SK-N-SH (cell line): ENCODE measurements at regions of chr9 and their contacts with region 1.

Region 1: GRCh38 chr9:4662108-4662988 is at the start of gene PLPP6:
- DNase-seq: peak; percentile 92
- H3K4me3 ChIP-seq: peak within 1 kb of the TSS; percentile 77 to 88
- H3K27ac ChIP-seq: peak within 1 kb of the TSS; percentile 69 to 81
- H3K4me1 ChIP-seq: peaks cover 3 to 33% of the 10 kb centered on the region in 2 experiments; a peak in 3 of 4 replicates
- H3K27me3 ChIP-seq: no peaks in the 10 kb centered on the region
- CTCF ChIP-seq: peak; percentile 57
- EP300 ChIP-seq: no peak
- RAD21 ChIP-seq: peak; percentile 64
- polyA plus RNA-seq, gene PLPP6: 8.8 and 11.2 TPM in 2 replicates

Region 2: GRCh38 chr9:3698531-3698930 is 963.8 kb before region 1 on chr9:
- CTCF ChIA-PET with region 1: no interaction called
- POLR2A ChIA-PET with region 1: no interaction called
- DNase-seq: no peak
- H3K4me3 ChIP-seq: no peak overlapping the region
- H3K27ac ChIP-seq: no peak overlapping the region
- H3K4me1 ChIP-seq: no peaks in the 10 kb centered on the region; a peak in 1 of 4 replicates
- H3K27me3 ChIP-seq: no peaks in the 10 kb centered on the region
- CTCF ChIP-seq: no peak
- EP300 ChIP-seq: no peak
- RAD21 ChIP-seq: no peak

Region 3: DNA sequence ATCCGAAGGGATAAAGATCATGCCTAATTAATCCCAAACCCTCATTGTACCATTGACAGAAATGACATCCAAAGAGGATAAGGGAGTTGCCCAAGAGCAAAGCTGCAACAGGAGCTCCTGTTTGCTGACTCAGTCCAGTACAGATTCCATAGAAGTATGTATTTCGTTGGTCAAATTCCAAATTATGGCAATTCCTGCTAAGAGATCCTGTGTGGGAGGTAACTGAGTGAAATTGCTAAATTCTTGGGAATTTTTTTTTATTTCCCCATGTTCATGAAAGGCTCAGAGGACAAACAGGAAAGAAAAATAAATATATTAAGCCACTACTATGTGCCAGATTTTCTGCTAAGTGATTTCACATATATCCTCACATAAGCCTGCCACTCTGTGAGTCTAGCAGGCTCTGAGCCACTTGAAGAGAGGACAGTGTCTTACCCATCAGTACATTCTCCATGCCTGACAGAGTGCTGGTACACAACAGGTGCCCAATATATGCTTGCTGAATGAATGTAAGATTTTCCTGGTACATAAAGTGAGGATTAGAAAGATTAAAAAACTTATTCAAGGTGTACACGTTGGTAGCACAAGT is 495.2 kb before region 1 on chr9:
- CTCF ChIA-PET with region 1: no interaction called
- POLR2A ChIA-PET with region 1: no interaction called
- DNase-seq: no peak
- H3K4me3 ChIP-seq: no peak overlapping the region
- H3K27ac ChIP-seq: no peak overlapping the region
- H3K4me1 ChIP-seq: no peaks in the 10 kb centered on the region
- H3K27me3 ChIP-seq: no peaks in the 10 kb centered on the region
- CTCF ChIP-seq: no peak
- EP300 ChIP-seq: 0 out of 4 replicates have a peak, but pooled peaks of 1 of the 2 experiments have one; percentile 9
- RAD21 ChIP-seq: no peak

Region 4: DNA sequence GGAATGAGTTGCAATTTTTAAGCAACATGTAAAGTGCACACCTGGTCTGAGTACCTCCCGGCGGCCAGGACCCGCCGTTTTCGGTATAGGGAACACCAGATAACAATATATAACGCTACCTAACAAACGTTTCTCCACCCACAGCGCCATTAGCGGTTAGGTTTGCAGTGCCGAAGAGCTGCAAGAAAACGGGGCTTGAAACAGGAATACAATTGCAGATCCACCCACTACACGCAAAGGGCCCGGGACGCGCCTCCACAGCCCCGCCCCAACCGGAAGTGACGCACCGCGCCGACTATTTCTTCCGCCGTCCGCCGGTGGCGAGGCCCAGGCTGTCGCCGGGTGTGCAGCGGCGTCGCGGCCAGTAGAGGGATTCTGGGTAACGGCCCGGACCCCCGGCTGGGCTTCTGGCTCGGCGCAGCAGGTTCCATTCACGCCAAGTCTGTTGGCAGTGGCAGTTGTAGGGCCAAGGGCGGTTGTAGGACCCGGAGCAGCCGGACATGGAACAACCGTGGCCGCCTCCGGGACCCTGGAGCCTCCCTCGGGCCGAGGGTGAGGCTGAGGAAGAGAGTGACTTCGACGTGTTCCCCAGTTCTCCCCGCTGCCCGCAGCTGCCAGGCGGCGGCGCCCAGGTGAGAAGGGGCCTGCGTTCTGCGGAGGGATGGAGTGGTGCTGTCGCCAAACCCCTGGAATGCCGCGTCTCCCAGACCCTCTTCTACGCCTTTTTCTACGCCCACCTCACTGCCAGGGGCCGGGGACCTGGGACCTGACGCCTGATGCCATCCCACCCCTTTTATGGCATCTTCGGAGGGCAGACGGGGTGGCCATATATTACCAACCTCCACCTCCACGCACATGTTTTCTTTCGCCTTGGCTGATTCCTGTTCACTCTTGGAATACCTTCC is 17.2 kb after region 1 on chr9 and contains the start of gene CDC37L1:
- CTCF ChIA-PET with region 1: interaction called, 10 read pairs
- POLR2A ChIA-PET with region 1: interaction called, 17 read pairs
- DNase-seq: peak; percentile 93
- H3K4me3 ChIP-seq: peak within 1 kb of the TSS; percentile 80 to 85
- H3K27ac ChIP-seq: peak within 1 kb of the TSS; percentile 96 to 97
- H3K4me1 ChIP-seq: peaks cover 3 to 5% of the 10 kb centered on the region in 2 experiments; a peak in 3 of 4 replicates
- H3K27me3 ChIP-seq: no peaks in the 10 kb centered on the region
- CTCF ChIP-seq: peak; percentile 60
- EP300 ChIP-seq: no peak
- RAD21 ChIP-seq: no peak
- polyA plus RNA-seq, gene CDC37L1: 6.5 and 7.2 TPM in 2 replicates

Region 5: GRCh38 chr9:4740638-4741364 is 78.5 kb after region 1 on chr9 and contains the start of gene AK3:
- CTCF ChIA-PET with region 1: interaction called, 12 read pairs
- POLR2A ChIA-PET with region 1: interaction called, 8 read pairs
- DNase-seq: peak; percentile 99
- H3K4me3 ChIP-seq: peak within 1 kb of the TSS; percentile 73 to 92
- H3K27ac ChIP-seq: peak within 1 kb of the TSS; percentile 67 to 78
- H3K4me1 ChIP-seq: peaks cover 5 to 13% of the 10 kb centered on the region in 2 experiments; a peak in 2 of 4 replicates
- H3K27me3 ChIP-seq: no peaks in the 10 kb centered on the region
- CTCF ChIP-seq: peak; percentile 23; the same call in 1 of the 2 replicates
- EP300 ChIP-seq: no peak
- RAD21 ChIP-seq: peak; percentile 42
- polyA plus RNA-seq, gene AK3: 20.6 and 30.8 TPM in 2 replicates

Region 6: DNA sequence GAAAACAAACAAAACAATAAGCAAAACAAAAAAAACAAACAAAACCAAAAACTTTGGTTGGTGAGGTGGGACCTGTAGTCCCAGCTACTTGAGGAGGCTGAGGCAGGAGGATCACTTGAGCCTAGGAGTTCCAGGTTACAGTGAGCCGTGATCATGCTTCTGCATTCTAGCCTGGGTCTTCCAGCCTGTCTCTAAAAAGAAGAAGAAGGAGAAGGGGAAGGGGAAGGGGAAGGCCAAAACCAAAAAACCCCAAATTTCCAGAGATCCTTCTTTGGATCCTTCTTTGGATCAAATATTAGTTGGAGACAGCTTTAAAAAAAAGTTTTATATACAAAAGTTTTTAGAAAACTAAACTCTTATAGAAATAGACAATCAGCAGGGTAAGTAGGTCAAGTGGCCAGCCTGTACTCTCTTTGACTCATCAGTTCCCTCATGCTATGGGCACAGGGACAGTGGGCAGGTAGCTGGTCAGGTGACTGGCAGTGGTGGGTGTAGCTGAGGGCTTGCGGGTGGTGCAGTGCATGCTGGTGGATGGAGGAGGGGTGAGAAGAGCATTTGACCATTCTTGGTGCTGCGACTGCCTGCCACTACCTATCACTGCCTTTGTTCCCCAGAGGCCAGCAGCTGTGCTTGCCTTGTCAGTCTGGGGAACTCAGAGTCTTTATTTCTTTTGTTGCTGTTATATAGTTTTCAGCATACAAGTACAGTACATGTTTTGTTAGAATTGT is 143.0 kb after region 1 on chr9:
- CTCF ChIA-PET with region 1: no interaction called
- POLR2A ChIA-PET with region 1: no interaction called
- DNase-seq: no peak
- H3K4me3 ChIP-seq: no peak overlapping the region
- H3K27ac ChIP-seq: no peak overlapping the region
- H3K4me1 ChIP-seq: no peaks in the 10 kb centered on the region
- H3K27me3 ChIP-seq: no peaks in the 10 kb centered on the region
- CTCF ChIP-seq: no peak
- EP300 ChIP-seq: no peak
- RAD21 ChIP-seq: no peak

Region 7: GRCh38 chr9:4862506-4863250 is 200.3 kb after region 1 on chr9:
- CTCF ChIA-PET with region 1: no interaction called
- POLR2A ChIA-PET with region 1: no interaction called
- DNase-seq: no peak
- H3K4me3 ChIP-seq: no peak overlapping the region
- H3K27ac ChIP-seq: no peak overlapping the region
- H3K4me1 ChIP-seq: peaks cover 0 to 4% of the 10 kb centered on the region in 2 experiments; a peak in 2 of 4 replicates
- H3K27me3 ChIP-seq: no peaks in the 10 kb centered on the region
- CTCF ChIP-seq: no peak
- EP300 ChIP-seq: no peak
- RAD21 ChIP-seq: no peak